A549 (cell line): ENCODE measurements at regions of chr9 and their contacts with region 1.

Region 1: GRCh38 chr9:115591584-115591984 is 473.6 kb upstream of the TNC start:
- DNase-seq: peak; percentile 83 to 97
- ATAC-seq: peak; percentile 89 to 92
- H3K4me3 ChIP-seq: no peak overlapping the region
- H3K27ac ChIP-seq: peak overlapping the region; percentile 89 to 93
- H3K4me1 ChIP-seq: peaks cover 65% of the 10 kb centered on the region
- CTCF ChIP-seq: peak; percentile 95
- EP300 ChIP-seq: peak in 1 of 2 experiments; percentile 74; a peak in 2 of 5 replicates
- POLR2A ChIP-seq: no peak
- RAD21 ChIP-seq: peak; percentile 97 to 99

Region 2: GRCh38 chr9:115058684-115059315 is 532.8 kb before region 1 on chr9:
- CTCF ChIA-PET with region 1: no interaction called
- POLR2A ChIA-PET with region 1: no interaction called
- DNase-seq: no peak
- ATAC-seq: peak; percentile 44 to 63; a peak in 2 of 6 replicates
- H3K4me3 ChIP-seq: no peak overlapping the region
- H3K27ac ChIP-seq: peak overlapping the region in 1 of 2 experiments; percentile 29; a peak in 2 of 6 replicates
- H3K4me1 ChIP-seq: peaks cover 22% of the 10 kb centered on the region
- CTCF ChIP-seq: no peak
- EP300 ChIP-seq: no peak
- POLR2A ChIP-seq: no peak
- RAD21 ChIP-seq: no peak

Region 3: DNA sequence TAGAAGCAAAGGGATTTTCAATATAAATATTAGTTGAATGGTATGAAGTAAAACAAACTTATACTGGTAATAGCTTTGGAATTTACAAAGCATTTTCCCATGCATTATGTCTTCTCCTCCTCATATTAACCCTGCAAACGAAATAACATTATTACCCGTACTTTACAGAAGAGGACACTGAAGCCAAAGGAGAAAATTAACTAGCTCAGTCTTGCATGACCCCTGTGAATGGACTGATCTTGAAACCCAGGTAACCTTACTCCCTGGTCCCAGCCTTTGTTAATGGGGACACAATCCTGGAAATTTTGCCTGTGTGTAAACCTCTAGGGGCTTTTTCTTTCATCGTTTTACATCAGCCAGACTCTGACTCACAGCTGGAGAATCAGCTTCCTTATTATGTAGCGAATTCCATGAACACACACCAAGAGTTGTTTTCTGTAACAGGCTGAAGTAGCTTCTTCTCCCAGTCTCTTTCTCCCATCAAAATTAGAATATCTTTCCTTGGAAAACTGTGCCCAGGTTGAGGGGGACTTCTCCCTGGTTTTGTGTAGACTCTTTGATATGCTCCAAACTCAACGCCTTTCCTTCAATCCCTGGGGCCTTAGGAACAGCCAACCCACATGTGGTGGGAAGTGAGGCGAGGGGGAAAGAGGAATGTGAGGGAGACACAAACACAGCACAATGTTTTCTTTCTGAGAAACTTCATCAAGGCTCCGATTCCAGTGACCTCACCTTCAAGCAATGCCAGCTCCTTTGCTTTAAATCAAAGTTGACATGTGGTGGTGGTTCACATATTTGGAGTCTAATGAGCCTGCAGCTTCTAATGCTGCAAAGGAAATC is 81.1 kb after region 1 on chr9:
- CTCF ChIA-PET with region 1: interaction called, 79 read pairs
- POLR2A ChIA-PET with region 1: interaction called, 26 read pairs
- DNase-seq: peak; percentile 84 to 96
- ATAC-seq: peak; percentile 89 to 95
- H3K4me3 ChIP-seq: no peak overlapping the region
- H3K27ac ChIP-seq: peak overlapping the region; percentile 91 to 98
- H3K4me1 ChIP-seq: peaks cover 56% of the 10 kb centered on the region
- CTCF ChIP-seq: peak; percentile 12; the same call in 1 of the 3 replicates
- EP300 ChIP-seq: peak; percentile 94 to 96
- POLR2A ChIP-seq: no peak
- RAD21 ChIP-seq: peak; percentile 58 to 66

Region 4: DNA sequence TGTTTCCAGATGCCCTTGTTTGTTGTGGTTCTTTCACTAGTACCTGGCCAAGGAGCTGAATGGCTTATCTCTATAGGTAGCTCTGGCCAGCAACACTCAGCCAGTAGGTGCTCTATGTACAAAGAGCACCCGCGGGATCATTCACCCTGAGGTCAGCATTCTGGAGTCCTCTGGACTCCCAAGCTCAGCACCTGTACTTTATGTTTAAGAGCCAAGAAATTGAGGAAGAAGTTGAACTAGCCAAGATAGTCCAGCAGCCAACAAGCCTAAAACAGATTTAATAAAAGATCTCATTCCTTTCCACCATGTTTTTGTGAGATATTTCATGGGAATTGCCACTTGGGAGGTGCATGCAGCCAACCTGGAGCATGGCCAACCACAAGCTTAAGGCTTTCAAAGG is 319.4 kb after region 1 on chr9:
- CTCF ChIA-PET with region 1: interaction called, 10 read pairs
- POLR2A ChIA-PET with region 1: no interaction called
- DNase-seq: no peak
- ATAC-seq: no peak
- H3K4me3 ChIP-seq: no peak overlapping the region
- H3K27ac ChIP-seq: peak overlapping the region in 1 of 2 experiments; percentile 40; a peak in 1 of 6 replicates
- H3K4me1 ChIP-seq: peaks cover 15% of the 10 kb centered on the region
- CTCF ChIP-seq: no peak
- EP300 ChIP-seq: no peak
- POLR2A ChIP-seq: no peak
- RAD21 ChIP-seq: no peak

Region 5: DNA sequence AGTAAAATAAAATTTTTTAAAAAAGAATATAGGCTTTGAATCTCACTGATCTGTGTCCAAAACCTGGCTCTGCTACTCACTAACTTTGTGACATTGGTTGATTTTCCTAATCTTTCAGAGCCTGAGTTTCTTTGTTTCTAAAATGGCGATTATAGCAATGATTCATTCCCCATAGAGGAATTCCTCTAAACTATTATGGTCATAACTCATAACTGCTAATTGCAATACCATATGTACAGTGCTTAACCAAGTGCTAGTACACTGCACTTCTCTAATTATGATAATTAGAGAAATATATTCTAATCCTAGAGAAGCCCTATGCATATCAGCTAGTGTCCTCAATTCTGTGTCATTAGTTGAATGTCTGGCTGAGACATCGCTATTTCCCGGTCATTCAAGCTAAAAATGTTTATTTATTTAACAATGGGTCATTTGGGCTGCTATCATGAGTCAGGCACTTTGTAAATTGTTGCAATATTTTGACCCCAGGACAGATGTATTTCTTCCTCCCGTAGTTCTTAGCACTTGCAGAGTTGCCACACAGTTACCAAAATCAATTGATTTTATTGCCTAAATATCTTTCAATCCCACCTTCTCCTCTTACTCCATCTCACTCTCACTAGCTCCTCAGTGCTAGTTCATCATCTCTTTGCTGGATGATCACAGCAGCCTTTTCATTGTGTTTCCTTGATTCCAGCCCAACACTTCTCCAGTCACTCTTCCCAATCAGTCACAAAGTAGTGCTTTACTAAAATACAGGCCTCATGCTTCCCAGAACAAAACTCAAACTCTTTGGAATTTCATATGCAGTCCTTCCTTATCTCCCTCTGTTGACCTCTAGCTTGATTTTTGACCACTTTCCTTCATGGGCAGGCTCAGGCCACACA is 361.1 kb after region 1 on chr9:
- CTCF ChIA-PET with region 1: interaction called, 19 read pairs
- POLR2A ChIA-PET with region 1: no interaction called
- DNase-seq: peak; percentile 37 to 84
- ATAC-seq: peak; percentile 85 to 90
- H3K4me3 ChIP-seq: no peak overlapping the region
- H3K27ac ChIP-seq: peak overlapping the region; percentile 91 to 99
- H3K4me1 ChIP-seq: peaks cover 41% of the 10 kb centered on the region
- CTCF ChIP-seq: no peak
- EP300 ChIP-seq: peak; percentile 92 to 93; a peak in 4 of 5 replicates
- POLR2A ChIP-seq: no peak
- RAD21 ChIP-seq: peak; percentile 2 to 61; a peak in 3 of 5 replicates

Region 6: GRCh38 chr9:116156621-116157314 is 565.2 kb after region 1 on chr9:
- CTCF ChIA-PET with region 1: interaction called, 70 read pairs
- POLR2A ChIA-PET with region 1: interaction called, 40 read pairs
- DNase-seq: peak; percentile 72 to 85
- ATAC-seq: peak; percentile 31 to 45; a peak in 5 of 6 replicates
- H3K4me3 ChIP-seq: peak overlapping the region; percentile 87
- H3K27ac ChIP-seq: peak overlapping the region; percentile 99 to 100
- H3K4me1 ChIP-seq: peaks cover 57% of the 10 kb centered on the region
- CTCF ChIP-seq: no peak
- EP300 ChIP-seq: peak in 1 of 2 experiments; percentile 28; a peak in 1 of 5 replicates
- POLR2A ChIP-seq: no peak
- RAD21 ChIP-seq: peak; percentile 8 to 34; a peak in 2 of 5 replicates

Region 7: GRCh38 chr9:116572095-116572748 is 980.6 kb after region 1 on chr9:
- CTCF ChIA-PET with region 1: interaction called, 31 read pairs
- POLR2A ChIA-PET with region 1: no interaction called
- DNase-seq: peak; percentile 87
- ATAC-seq: peak; percentile 92 to 94
- H3K4me3 ChIP-seq: no peak overlapping the region
- H3K27ac ChIP-seq: peak overlapping the region; percentile 93 to 99
- H3K4me1 ChIP-seq: peaks cover 69% of the 10 kb centered on the region
- CTCF ChIP-seq: peak; percentile 93
- EP300 ChIP-seq: peak in 1 of 2 experiments; percentile 43; a peak in 1 of 5 replicates
- POLR2A ChIP-seq: no peak
- RAD21 ChIP-seq: peak; percentile 99

Region 8: DNA sequence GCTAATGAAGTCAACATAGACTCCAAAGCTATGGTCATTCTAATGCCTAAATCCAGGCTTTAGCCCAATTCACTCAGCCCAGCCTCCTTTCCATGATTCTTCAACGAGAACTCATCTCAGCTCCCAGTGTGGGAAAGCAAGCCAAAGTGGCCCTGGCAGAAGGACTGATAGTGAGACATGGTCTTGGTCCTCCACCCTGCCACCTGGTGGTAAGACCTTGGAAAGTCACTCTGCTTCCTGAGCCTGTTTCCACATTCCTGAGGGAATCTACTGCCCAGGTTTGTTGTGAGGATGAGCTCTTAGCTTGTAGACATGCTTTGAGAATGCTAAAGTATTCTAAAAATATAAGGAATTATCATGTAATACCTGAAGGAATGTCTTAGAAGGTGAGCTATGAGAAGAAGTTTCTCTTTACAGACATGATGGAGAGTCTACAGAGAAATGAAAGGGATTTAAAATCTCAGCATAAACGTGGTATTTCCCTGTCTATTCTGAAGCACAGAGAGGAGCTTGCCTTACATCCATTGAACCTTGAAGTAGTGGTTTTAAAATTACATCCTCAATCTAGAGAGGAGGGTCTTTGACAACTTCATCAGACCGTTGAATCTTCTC is 1269.0 kb after region 1 on chr9:
- CTCF ChIA-PET with region 1: interaction called, 12 read pairs
- POLR2A ChIA-PET with region 1: no interaction called
- DNase-seq: peak; percentile 62 to 76
- ATAC-seq: peak; percentile 92 to 97
- H3K4me3 ChIP-seq: no peak overlapping the region
- H3K27ac ChIP-seq: no peak overlapping the region
- H3K4me1 ChIP-seq: no peaks in the 10 kb centered on the region
- CTCF ChIP-seq: peak; percentile 67
- EP300 ChIP-seq: no peak
- POLR2A ChIP-seq: no peak
- RAD21 ChIP-seq: peak; percentile 52 to 57